ENCODE measurements at regions of chr1 and their contacts with region 1.

Region 1: DNA sequence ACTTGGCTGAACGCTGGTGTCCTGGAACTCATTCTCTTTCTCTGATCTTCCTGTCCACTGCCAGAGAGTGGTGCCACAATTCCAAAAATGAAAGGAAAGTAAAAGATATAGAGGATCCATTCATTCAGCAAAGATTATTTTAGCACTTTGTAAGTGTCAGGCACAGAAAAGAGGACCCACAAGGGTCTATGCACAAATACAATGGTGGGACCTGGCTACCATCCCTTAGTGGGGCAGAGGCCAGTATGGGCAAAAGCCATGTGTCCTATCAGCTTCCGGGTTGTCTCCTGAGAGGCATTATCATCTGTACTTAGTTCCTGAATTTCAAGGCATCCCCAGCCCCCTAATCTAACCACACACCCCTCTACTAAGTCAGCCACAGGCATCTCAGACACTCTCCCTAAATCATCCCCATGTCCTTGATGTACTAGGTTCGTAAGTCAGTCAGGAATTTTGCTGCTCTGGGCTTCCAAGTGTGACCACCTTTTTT is 19.0 kb downstream of the SSR2 start:
- DNase-seq: no peak
- ATAC-seq: no peak
- H3K4me3 ChIP-seq: no peak overlapping the region
- H3K27ac ChIP-seq: no peak overlapping the region
- H3K4me1 ChIP-seq: peaks cover 11% of the 10 kb centered on the region
- H3K27me3 ChIP-seq: no peaks in the 10 kb centered on the region
- CTCF ChIP-seq: no peak

Region 2: GRCh38 chr1:156020292-156021089 is 18.8 kb after region 1 on chr1 and contains the start of gene SSR2:
- CTCF ChIA-PET with region 1: no interaction called
- POLR2A ChIA-PET with region 1: interaction called, 14 read pairs
- intact Hi-C with region 1: no loop called
- DNase-seq: peak; percentile 98
- ATAC-seq: peak; percentile 98
- H3K4me3 ChIP-seq: peak within 1 kb of the TSS; percentile 75
- H3K27ac ChIP-seq: no peak within 1 kb of the TSS
- H3K4me1 ChIP-seq: peaks cover 6% of the 10 kb centered on the region; the same call in 1 of the 2 replicates
- H3K27me3 ChIP-seq: no peaks in the 10 kb centered on the region
- CTCF ChIP-seq: no peak
- total RNA-seq, gene SSR2: 282 and 293 TPM in 2 replicates

Region 3: GRCh38 chr1:156065212-156065611 is 63.5 kb after region 1 on chr1:
- CTCF ChIA-PET with region 1: interaction called, 14 read pairs
- POLR2A ChIA-PET with region 1: no interaction called
- intact Hi-C with region 1: loop called (anchors 5 kb)
- DNase-seq: no peak
- ATAC-seq: no peak
- H3K4me3 ChIP-seq: no peak overlapping the region
- H3K27ac ChIP-seq: no peak overlapping the region
- H3K4me1 ChIP-seq: peaks cover 10% of the 10 kb centered on the region; the same call in 1 of the 2 replicates
- H3K27me3 ChIP-seq: no peaks in the 10 kb centered on the region
- CTCF ChIP-seq: no peak